Calu3 (cell line): ENCODE measurements at regions of chr9 and their contacts with region 1.

Region 1: DNA sequence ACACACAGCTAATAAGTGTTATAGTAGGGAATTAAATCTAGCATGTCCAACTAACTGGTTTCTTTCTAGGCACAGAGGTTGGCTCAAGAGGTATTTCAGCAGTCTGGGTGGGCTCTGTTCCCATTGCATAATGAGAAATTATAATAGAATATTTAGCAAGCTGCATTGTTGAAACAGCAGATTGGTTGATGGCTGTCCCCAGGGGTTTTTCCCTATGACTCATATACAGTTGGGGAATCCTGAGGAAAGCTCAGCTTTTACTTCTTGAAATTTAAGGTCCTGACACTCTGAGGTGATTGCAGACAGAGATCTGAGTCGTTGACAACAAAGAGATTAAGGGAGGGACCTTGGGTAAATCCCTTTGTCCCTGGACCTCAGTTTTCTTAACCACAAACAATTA is 38.3 kb upstream of the TNFSF8 start:
- DNase-seq: no peak
- H3K4me3 Mint-ChIP-seq: no peak overlapping the region
- H3K27ac Mint-ChIP-seq: no peak overlapping the region
- H3K4me1 Mint-ChIP-seq: no peaks in the 10 kb centered on the region
- H3K27me3 Mint-ChIP-seq: peaks cover 29% of the 10 kb centered on the region
- CTCF ChIP-seq: no peak

Region 2: DNA sequence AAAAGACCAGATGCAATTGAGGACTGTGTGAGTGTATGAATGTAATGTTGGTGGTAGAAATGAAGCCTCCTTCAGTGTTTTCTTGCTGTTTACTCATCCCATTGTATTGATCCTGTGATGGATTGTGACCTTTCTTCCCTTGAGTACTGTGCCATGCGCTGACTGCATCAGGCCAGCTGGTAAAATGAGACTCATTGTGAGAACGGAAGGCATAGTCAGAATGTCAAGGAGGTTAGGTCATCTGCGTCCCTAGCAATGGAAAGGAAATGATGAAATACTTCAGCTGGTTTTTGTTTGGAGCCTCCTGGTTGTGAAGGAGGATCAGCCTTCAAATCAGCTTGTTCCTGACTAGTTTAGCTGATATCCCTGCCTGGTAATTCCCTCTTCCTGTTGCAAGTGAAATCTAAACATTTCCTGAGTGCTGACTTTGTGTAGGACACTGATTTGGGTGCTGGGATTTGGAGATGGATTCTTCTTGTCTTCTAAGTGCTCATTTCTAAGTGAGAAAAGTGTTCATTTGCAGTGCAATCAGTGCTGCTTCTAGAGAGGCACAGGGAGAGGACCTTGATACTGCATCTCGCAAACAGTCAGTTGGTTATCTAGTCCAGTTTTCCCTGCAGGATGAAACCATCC is 73.8 kb before region 1 on chr9:
- CTCF ChIA-PET with region 1: no interaction called
- intact Hi-C with region 1: no loop called
- DNase-seq: peak; percentile 40
- H3K4me3 Mint-ChIP-seq: no peak overlapping the region
- H3K27ac Mint-ChIP-seq: peak overlapping the region; percentile 50
- H3K4me1 Mint-ChIP-seq: peaks cover 38% of the 10 kb centered on the region
- H3K27me3 Mint-ChIP-seq: no peaks in the 10 kb centered on the region
- CTCF ChIP-seq: no peak

Region 3: DNA sequence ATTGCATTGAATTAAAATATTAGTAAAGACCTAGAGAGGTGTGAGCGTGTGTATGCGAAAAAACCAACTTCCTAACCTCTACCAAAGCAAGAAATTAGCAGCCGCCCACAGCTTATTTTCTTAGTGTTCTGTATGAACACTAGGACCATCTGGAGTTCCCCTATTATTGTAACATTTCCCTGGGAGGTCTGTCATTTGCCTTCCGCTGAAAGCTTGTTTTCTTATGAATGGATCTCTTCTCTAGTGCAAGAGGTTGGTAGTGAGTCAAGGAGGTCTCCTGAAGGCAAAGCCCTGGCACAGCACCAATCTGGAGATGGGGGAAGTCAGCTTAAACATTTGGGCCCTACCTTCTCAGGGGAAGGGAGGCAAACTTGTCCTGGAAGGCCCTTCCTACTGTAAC is 49.1 kb before region 1 on chr9:
- CTCF ChIA-PET with region 1: no interaction called
- intact Hi-C with region 1: loop called (anchors 5 kb)
- DNase-seq: no peak
- H3K4me3 Mint-ChIP-seq: no peak overlapping the region
- H3K27ac Mint-ChIP-seq: no peak overlapping the region
- H3K4me1 Mint-ChIP-seq: no peaks in the 10 kb centered on the region
- H3K27me3 Mint-ChIP-seq: peaks cover 64% of the 10 kb centered on the region
- CTCF ChIP-seq: no peak

Region 4: GRCh38 chr9:114988962-114989599 is 20.4 kb after region 1 on chr9:
- CTCF ChIA-PET with region 1: interaction called, 11 read pairs
- intact Hi-C with region 1: no loop called
- DNase-seq: no peak
- H3K4me3 Mint-ChIP-seq: no peak overlapping the region
- H3K27ac Mint-ChIP-seq: no peak overlapping the region
- H3K4me1 Mint-ChIP-seq: no peaks in the 10 kb centered on the region
- H3K27me3 Mint-ChIP-seq: peaks cover 73% of the 10 kb centered on the region
- CTCF ChIP-seq: no peak